ENCODE measurements at regions of chr12 and their contacts with region 1.

Region 1: GRCh38 chr12:103073630-103074029 is 116.2 kb downstream of the ASCL1 start:
- DNase-seq: no peak
- ATAC-seq: no peak
- H3K4me3 ChIP-seq: no peak overlapping the region
- H3K4me3 Mint-ChIP-seq: no peak overlapping the region
- H3K27ac ChIP-seq: no peak overlapping the region
- H3K27ac Mint-ChIP-seq: no peak overlapping the region
- H3K4me1 ChIP-seq: no peaks in the 10 kb centered on the region
- H3K4me1 Mint-ChIP-seq: no peaks in the 10 kb centered on the region
- H3K27me3 ChIP-seq: no peaks in the 10 kb centered on the region
- H3K27me3 Mint-ChIP-seq: no peaks in the 10 kb centered on the region
- CTCF ChIP-seq: no peak

Region 2: DNA sequence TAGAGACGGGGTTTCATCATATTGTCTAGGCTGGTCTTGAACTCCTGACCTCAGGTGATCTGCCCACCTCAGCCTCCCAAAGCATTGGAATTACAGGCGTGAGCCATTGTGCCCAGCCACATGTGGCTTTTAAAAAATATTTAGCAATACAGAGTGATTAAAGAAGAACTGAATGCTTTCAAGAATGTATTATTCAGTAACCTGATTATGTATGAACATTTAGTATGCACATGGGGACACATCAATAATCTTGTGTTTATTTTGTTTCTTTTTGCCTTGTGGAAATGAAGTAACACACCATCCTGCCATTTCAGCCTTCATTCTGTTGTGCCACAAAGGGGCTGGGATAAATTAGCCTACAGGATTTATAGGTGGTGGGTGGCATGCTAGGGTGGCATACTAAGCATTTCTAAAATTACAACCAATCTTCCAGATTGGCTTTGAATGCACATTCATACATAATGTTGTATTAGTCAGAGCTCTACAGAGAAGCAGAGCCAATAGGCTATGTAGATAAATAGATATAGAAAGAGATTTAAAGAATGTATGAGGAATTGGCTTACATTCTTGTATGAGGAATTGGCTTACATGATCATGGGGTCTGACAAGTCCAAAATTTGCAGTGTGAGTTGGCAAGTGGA is 1116.4 kb after region 1 on chr12:
- CTCF ChIA-PET with region 1: no interaction called
- POLR2A ChIA-PET with region 1: no interaction called
- intact Hi-C with region 1: no loop called
- DNase-seq: no peak
- ATAC-seq: no peak
- H3K4me3 ChIP-seq: no peak overlapping the region
- H3K4me3 Mint-ChIP-seq: no peak overlapping the region
- H3K27ac ChIP-seq: no peak overlapping the region
- H3K27ac Mint-ChIP-seq: no peak overlapping the region
- H3K4me1 ChIP-seq: no peaks in the 10 kb centered on the region
- H3K4me1 Mint-ChIP-seq: no peaks in the 10 kb centered on the region
- H3K27me3 ChIP-seq: no peaks in the 10 kb centered on the region
- H3K27me3 Mint-ChIP-seq: no peaks in the 10 kb centered on the region
- CTCF ChIP-seq: no peak

Region 3: GRCh38 chr12:104604070-104604994 is 1530.7 kb after region 1 on chr12:
- CTCF ChIA-PET with region 1: no interaction called
- POLR2A ChIA-PET with region 1: no interaction called
- intact Hi-C with region 1: no loop called
- DNase-seq: peak in 11 of 14 experiments; percentile 5 to 77 (median 20)
- ATAC-seq: peak; percentile 85
- H3K4me3 ChIP-seq: peak overlapping the region; percentile 3
- H3K4me3 Mint-ChIP-seq: peak overlapping the region; percentile 11
- H3K27ac ChIP-seq: peak overlapping the region; percentile 6 to 48
- H3K27ac Mint-ChIP-seq: peak overlapping the region; percentile 81
- H3K4me1 ChIP-seq: peaks cover 39% of the 10 kb centered on the region
- H3K4me1 Mint-ChIP-seq: peaks cover 58% of the 10 kb centered on the region
- H3K27me3 ChIP-seq: no peaks in the 10 kb centered on the region
- H3K27me3 Mint-ChIP-seq: no peaks in the 10 kb centered on the region
- CTCF ChIP-seq: no peak

Region 4: DNA sequence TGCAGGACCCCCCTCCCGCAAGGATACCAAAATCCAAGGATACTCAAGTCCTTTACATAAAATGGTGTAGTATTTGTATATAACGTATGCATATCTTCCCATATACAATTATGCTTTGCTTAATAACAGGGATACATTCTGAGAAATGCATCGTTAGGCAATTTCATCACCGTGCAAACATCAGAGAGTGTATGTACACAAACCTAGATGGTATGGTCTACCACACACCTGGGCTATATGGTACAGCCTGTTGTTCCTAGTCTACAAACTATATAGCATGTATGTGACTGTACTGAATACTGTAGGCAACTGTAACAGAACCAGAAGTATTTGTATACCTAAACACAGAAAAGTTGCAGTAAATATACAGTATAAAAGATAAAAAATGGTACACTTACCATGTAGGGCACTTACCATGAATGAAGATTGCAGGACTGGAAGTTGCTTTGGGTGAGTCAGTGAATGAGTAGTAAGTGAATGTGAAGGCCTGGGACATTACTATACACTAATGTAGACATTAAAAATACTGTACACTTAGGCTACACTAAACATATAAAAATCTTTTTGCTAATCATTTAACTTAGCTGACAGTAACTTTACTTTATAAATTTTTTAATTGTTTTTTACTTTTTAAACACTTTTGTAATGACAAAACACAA is 1743.3 kb after region 1 on chr12:
- CTCF ChIA-PET with region 1: no interaction called
- POLR2A ChIA-PET with region 1: no interaction called
- intact Hi-C with region 1: loop called in 1 of 2 experiments (anchors 10 kb)
- DNase-seq: no peak
- ATAC-seq: no peak
- H3K4me3 ChIP-seq: no peak overlapping the region
- H3K4me3 Mint-ChIP-seq: no peak overlapping the region
- H3K27ac ChIP-seq: no peak overlapping the region
- H3K27ac Mint-ChIP-seq: no peak overlapping the region
- H3K4me1 ChIP-seq: no peaks in the 10 kb centered on the region
- H3K4me1 Mint-ChIP-seq: no peaks in the 10 kb centered on the region
- H3K27me3 ChIP-seq: no peaks in the 10 kb centered on the region
- H3K27me3 Mint-ChIP-seq: no peaks in the 10 kb centered on the region
- CTCF ChIP-seq: no peak

Measured in CD4-positive, alpha-beta T cell (primary cell).